Dorsolateral prefrontal cortex (tissue), 120 donors: ENCODE measurements at regions of chr6 and their contacts with region 1.

Region 1: DNA sequence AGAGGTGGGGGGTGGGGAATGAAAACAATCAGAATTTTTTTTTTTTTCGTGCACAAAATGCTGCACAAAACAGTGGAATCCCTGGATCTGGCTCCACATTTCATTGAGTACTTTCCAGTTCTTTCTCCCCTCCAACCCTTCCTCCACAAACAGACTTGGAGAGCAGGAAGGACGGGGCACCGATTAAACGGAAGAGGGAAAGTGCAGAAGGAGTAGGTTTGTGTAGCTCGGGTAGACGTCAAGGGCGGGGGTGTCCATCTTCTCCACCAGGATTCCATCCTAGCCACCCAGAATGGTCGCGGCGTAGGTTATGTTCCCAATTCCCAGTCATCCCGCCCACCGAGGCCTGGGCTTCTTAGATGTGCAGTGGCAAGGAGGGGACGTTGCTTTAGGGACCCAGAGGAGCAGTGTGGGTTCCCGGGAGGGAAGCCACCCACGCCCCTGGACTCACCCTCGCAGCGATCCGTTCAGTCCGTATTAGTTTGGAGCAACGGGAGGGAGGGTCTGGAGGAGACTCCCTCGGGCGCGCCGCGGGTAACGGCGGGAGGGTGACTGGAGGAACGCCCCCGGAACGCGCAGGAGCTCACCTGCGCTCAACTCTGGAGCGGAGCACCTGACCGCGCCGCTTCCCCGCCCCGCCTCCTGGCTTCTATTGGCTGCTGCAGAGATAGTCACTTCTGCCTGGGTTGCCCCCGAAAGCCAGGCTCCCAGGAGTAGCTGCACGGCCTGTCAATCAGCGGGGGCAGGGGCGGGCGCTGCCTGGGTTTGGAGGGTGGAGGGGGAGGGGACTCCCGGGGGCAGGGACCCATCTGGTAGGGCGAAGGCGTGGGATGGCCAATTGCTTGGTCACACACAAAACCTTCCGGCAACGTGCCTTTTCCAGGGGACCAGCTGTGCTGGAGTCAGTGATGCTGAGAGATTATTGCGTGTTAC is at the start of gene ENPP5:
- DNase-seq: peak; percentile 82 to 98 (median 94)
- H3K4me3 ChIP-seq: peak within 1 kb of the TSS; percentile 66 to 99 (median 87)
- H3K27ac ChIP-seq: peak within 1 kb of the TSS in 54 of 59 donors; percentile 18 to 87 (median 70)
- H3K27me3 ChIP-seq: no peaks in the 10 kb centered on the region
- CTCF ChIP-seq: peak in 7 of 56 donors; percentile 6 to 33 (median 19)
- total RNA-seq, gene ENPP5: 13.8 to 56.1 (median 36.0) TPM

Region 2: GRCh38 chr6:46129629-46130511 is 40.8 kb before region 1 on chr6 and contains the start of gene ENPP4:
- intact Hi-C with region 1: loop called (anchors 5 kb)
- DNase-seq: peak; percentile 77 to 91 (median 89)
- H3K4me3 ChIP-seq: peak within 1 kb of the TSS; percentile 47 to 96 (median 84)
- H3K27ac ChIP-seq: peak within 1 kb of the TSS; percentile 45 to 96 (median 85)
- H3K27me3 ChIP-seq: no peaks in the 10 kb centered on the region
- CTCF ChIP-seq: peak in 52 of 56 donors; percentile 6 to 68 (median 40)
- total RNA-seq, gene ENPP4: 20.6 to 69.1 (median 33.4) TPM